ENCODE measurements at regions of chr1 and their contacts with region 1.

Region 1: GRCh38 chr1:184419728-184420161 is 32.9 kb downstream of the C1orf21 start:
- DNase-seq: no peak
- ATAC-seq: no peak
- H3K4me3 ChIP-seq: no peak overlapping the region
- H3K4me3 Mint-ChIP-seq: peak overlapping the region; percentile 32
- H3K27ac ChIP-seq: no peak overlapping the region
- H3K27ac Mint-ChIP-seq: peak overlapping the region; percentile 67 to 74
- H3K4me1 ChIP-seq: peaks cover 10% of the 10 kb centered on the region
- H3K4me1 Mint-ChIP-seq: peaks cover 84 to 93% of the 10 kb centered on the region in 2 donors
- H3K27me3 ChIP-seq: no peaks in the 10 kb centered on the region
- H3K27me3 Mint-ChIP-seq: no peaks in the 10 kb centered on the region
- CTCF ChIP-seq: no peak

Region 2: GRCh38 chr1:184449916-184450315 is 30.2 kb after region 1 on chr1:
- intact Hi-C with region 1: loop called (anchors 5 kb)
- DNase-seq: no peak
- ATAC-seq: no peak
- H3K4me3 ChIP-seq: no peak overlapping the region
- H3K4me3 Mint-ChIP-seq: no peak overlapping the region
- H3K27ac ChIP-seq: no peak overlapping the region
- H3K27ac Mint-ChIP-seq: peak overlapping the region in 1 of 2 donors; percentile 32
- H3K4me1 ChIP-seq: peaks cover 9% of the 10 kb centered on the region
- H3K4me1 Mint-ChIP-seq: peaks cover 66 to 72% of the 10 kb centered on the region in 2 donors
- H3K27me3 ChIP-seq: no peaks in the 10 kb centered on the region
- H3K27me3 Mint-ChIP-seq: no peaks in the 10 kb centered on the region
- CTCF ChIP-seq: no peak

Region 3: DNA sequence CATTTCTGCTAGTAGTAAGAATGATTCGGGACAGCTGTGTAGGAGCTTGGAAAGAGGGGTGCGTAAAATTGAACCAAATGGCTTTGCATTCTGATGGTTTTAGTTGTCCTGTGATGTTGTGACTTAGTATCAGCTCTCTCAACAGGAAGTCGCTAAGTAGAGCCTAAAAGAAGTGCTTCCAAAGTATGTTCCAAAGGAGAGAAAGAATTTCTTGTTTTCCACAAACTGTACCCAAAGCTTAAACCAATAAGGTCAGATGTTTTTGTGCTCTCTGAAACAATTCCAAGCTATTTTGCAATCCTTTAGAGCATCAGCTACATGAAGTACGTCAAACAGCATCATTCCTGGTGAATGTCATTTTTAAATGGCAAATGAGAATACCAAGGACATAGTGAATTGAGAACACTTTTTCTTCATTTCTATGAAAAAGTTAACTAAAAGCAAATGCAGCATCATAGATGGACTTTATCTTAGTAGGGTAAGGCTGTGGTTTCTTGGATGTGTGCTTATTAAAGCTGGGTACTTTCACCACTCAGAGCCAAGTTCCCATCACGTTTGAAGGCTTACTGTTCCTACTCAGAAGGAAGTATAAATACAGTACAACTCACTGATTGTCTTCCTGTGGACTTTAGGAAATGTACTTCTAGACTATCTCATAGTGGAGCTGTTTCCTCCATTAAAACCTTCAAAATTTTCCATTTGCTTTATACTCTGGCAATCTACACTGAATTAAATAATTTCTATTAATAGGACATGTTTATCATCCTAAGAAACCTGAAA is 115.6 kb after region 1 on chr1:
- intact Hi-C with region 1: no loop called
- DNase-seq: no peak
- ATAC-seq: no peak
- H3K4me3 ChIP-seq: no peak overlapping the region
- H3K4me3 Mint-ChIP-seq: no peak overlapping the region
- H3K27ac ChIP-seq: no peak overlapping the region
- H3K27ac Mint-ChIP-seq: peak overlapping the region; percentile 2 to 72
- H3K4me1 ChIP-seq: peaks cover 3% of the 10 kb centered on the region
- H3K4me1 Mint-ChIP-seq: peaks cover 71 to 79% of the 10 kb centered on the region in 2 donors
- H3K27me3 ChIP-seq: no peaks in the 10 kb centered on the region
- H3K27me3 Mint-ChIP-seq: no peaks in the 10 kb centered on the region
- CTCF ChIP-seq: no peak

Region 4: GRCh38 chr1:185483664-185484450 is 1064.1 kb after region 1 on chr1:
- intact Hi-C with region 1: no loop called
- DNase-seq: no peak
- ATAC-seq: no peak
- H3K4me3 ChIP-seq: no peak overlapping the region
- H3K4me3 Mint-ChIP-seq: no peak overlapping the region
- H3K27ac ChIP-seq: no peak overlapping the region
- H3K27ac Mint-ChIP-seq: no peak overlapping the region
- H3K4me1 ChIP-seq: no peaks in the 10 kb centered on the region
- H3K4me1 Mint-ChIP-seq: no peaks in the 10 kb centered on the region
- H3K27me3 ChIP-seq: no peaks in the 10 kb centered on the region
- H3K27me3 Mint-ChIP-seq: no peaks in the 10 kb centered on the region
- CTCF ChIP-seq: no peak